GM10248 (cell line): ENCODE measurements at regions of chr15 and their contacts with region 1.

Region 1: GRCh38 chr15:63466378-63467192 is 37.8 kb upstream of the USP3 start:
- DNase-seq: peak; percentile 82
- CTCF ChIP-seq: peak; percentile 76

Region 2: GRCh38 chr15:63389902-63390670 is 76.5 kb before region 1 on chr15:
- CTCF ChIA-PET with region 1: no interaction called
- POLR2A ChIA-PET with region 1: no interaction called
- DNase-seq: no peak
- CTCF ChIP-seq: no peak

Region 3: DNA sequence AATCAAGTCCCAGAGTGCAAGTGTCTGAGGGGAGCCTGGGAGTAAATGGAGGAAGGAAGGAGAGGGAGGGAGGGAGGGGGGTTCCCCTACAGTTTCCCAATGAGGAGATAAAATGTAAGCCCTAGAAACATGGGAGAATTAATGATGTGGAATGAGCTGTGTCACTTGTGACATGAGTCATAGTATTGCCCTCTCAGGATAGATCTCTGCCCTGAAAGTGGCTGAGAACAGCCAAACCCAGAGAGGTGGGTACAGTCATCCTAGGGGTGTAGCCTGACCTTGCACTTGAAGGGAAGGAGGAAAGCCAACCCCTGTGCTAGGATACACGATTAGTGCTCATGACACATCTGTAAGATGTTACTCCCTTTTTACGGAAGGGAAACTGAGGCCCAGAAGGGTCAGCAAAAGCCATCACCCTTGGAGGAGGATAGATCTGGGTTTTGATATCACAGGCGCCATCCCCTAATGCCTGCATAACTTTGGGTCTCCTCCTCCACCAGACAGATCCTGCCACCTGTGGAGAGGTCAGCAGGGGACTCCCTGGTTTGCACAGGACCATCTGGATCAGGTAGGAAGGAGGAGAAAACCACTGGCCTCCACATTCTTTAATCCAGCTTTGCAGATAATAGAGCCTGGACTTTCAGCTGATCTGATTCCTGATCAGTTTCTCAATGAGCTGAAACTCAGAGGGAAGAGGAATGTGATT is 14.7 kb after region 1 on chr15:
- CTCF ChIA-PET with region 1: interaction called, 28 read pairs
- POLR2A ChIA-PET with region 1: no interaction called
- DNase-seq: no peak
- CTCF ChIP-seq: no peak

Region 4: GRCh38 chr15:63497642-63498467 is 31.3 kb after region 1 on chr15:
- CTCF ChIA-PET with region 1: interaction called, 18 read pairs
- POLR2A ChIA-PET with region 1: no interaction called
- DNase-seq: no peak
- CTCF ChIP-seq: no peak

Region 5: DNA sequence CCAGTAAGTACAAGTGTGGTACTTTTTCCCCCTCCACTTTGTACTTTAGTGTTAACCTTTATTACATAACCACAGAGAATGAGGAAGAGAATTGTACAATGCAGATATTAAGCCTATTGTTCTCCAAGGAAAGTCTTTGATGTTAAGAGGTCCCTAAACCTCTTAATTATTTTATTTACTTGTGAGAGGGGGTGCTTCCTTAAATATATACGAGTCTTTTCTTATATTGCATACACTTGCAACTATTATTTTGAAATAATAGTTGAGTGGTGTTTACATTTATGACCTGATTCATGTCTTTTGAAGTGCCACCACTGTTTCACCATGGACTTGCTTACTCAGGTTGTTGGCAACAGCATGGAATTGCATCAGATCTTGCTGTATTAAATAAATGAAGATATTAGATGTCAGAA is 48.0 kb after region 1 on chr15:
- CTCF ChIA-PET with region 1: interaction called, 13 read pairs
- POLR2A ChIA-PET with region 1: no interaction called
- DNase-seq: no peak
- CTCF ChIP-seq: no peak

Region 6: DNA sequence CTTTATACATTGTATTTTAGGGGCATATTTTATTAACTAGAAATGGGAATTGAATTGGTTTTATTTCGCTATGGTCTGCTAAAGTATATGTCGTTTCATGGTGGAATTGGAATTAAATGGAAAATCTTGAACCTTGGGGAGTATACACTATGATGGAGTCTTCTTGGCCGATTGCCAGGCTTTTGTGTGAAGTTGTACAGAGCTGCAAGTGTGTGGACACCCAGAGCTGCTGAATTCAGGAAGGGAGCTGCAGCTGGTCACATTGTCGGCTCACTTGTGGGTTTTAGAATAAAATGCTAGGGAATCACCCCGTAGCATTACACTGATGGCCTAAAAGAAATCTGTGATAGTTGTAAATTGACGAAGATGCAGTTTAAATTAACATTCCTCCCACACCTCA is 72.9 kb after region 1 on chr15:
- CTCF ChIA-PET with region 1: interaction called, 18 read pairs
- POLR2A ChIA-PET with region 1: no interaction called
- DNase-seq: no peak
- CTCF ChIP-seq: no peak

Region 7: DNA sequence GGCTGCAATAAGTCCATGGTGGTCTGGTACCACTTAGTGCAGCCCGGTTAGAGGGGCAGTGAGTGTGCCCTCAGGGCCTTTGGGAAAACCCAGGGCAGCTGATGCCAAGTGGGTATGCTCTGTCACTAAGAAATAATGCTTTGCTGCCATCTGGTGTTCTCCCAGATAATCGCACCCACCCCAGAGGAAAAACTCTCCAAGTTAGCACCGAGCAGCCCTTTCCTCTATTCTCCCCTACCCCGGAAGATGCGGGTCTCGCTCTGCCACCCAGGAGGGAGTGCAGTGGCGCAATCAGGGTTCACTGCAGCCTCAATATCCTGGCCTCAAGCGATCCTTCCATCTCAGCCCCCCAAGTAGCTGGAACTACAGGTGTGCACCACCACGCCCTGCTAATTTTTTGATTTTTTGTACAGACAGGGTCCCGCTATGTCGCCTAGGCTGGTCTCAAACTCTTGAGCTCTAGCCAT is 601.0 kb after region 1 on chr15:
- CTCF ChIA-PET with region 1: interaction called, 10 read pairs
- POLR2A ChIA-PET with region 1: no interaction called
- DNase-seq: peak; percentile 78
- CTCF ChIP-seq: peak; percentile 70